Activated naive CD4-positive, alpha-beta T cell treated with anti-CD3 and anti-CD28 coated beads for 36 hours (primary cell): ENCODE measurements at regions of chr1 and their contacts with region 1.

Region 1: DNA sequence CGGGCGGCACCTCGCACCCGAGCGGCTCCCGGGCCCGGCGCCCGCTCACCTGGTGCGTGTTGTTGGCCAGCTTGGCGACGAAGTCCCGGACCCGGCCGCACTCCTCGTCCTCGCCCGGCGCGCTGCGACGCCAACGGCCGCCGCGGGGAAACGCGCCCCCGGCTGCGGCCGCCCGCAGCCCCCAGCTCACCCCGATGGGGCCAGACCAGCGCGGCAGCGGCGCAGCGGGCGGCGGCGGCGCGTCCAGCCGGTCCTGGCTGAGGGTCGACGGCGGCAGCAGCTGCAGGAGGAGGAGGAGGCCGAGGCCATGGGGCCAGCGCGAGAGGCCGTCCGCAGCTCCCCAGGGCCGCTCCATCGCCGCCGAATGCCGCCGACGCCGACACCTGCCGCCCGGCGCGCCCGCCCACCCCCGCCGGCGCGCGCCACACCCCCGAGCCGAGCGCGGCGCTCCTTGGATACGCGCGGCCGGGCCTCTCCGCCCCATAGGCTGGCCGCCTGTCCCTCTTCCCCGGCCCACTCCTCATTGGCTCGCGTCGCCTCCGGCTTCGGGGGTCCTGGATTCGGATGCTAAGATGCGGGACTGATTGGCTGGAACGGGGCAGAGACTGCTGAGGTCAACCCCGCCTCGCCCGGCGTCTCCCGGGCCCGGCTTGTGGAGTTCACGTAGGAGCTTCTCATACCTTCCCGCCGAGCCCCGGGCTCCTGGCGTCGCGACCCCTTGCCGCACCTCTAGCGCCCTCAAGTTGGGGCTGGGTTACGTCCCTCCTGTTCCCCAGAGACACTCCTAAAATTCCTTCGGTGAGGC is at the start of gene SORT1:
- DNase-seq: peak; percentile 53
- H3K4me3 Mint-ChIP-seq: peak within 1 kb of the TSS; percentile 77
- H3K27ac Mint-ChIP-seq: no peak within 1 kb of the TSS
- H3K4me1 Mint-ChIP-seq: peaks cover 8% of the 10 kb centered on the region
- H3K27me3 Mint-ChIP-seq: peaks cover 35% of the 10 kb centered on the region
- total RNA-seq, gene SORT1: 0.32 to 0.33 TPM

Region 2: DNA sequence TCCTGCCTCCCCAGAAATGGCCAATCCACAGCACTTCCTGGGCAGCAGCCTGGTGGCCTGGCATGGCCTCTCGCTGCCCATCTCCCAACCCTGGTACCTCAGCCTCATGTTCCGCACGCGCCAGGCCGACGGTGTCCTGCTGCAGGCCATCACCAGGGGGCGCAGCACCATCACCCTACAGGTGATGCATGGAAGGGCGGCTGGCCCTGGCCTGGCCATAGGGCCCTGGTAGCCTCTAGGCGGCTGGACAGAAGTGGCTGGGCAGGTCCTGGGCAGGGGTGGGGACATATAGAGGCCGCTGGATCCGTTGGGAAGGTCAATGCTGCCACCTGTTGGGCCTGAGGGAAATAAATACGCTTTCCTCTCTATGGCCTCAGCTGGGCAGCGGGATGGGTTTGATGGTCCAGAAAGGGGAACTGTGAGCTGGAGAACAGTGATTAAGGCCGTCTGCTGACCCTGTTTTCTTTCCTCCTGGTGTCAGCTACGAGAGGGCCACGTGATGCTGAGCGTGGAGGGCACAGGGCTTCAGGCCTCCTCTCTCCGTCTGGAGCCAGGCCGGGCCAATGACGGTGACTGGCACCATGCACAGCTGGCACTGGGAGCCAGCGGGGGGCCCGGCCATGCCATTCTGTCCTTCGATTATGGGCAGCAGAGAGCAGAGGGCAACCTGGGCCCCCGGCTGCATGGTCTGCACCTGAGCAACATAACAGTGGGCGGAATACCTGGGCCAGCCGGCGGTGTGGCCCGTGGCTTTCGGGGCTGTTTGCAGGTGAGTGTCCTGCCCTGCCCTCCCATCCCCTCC is 133.9 kb before region 1 on chr1:
- CTCF ChIA-PET with region 1: interaction called, 33 read pairs
- intact Hi-C with region 1: loop called (anchors 1 kb)
- DNase-seq: peak; percentile 84
- H3K4me3 Mint-ChIP-seq: no peak overlapping the region
- H3K27ac Mint-ChIP-seq: no peak overlapping the region
- H3K4me1 Mint-ChIP-seq: peaks cover 3% of the 10 kb centered on the region
- H3K27me3 Mint-ChIP-seq: peaks cover 1% of the 10 kb centered on the region

Region 3: GRCh38 chr1:109277434-109278204 is 120.1 kb before region 1 on chr1:
- CTCF ChIA-PET with region 1: interaction called, 126 read pairs
- intact Hi-C with region 1: loop called (anchors 1 kb)
- DNase-seq: peak; percentile 73
- H3K4me3 Mint-ChIP-seq: no peak overlapping the region
- H3K27ac Mint-ChIP-seq: no peak overlapping the region
- H3K4me1 Mint-ChIP-seq: peaks cover 4% of the 10 kb centered on the region
- H3K27me3 Mint-ChIP-seq: no peaks in the 10 kb centered on the region

Region 4: GRCh38 chr1:109282952-109283747 is 114.6 kb before region 1 on chr1 and contains the start of gene PSRC1:
- CTCF ChIA-PET with region 1: interaction called, 126 read pairs
- intact Hi-C with region 1: loop called (anchors 1 kb)
- DNase-seq: peak; percentile 94
- H3K4me3 Mint-ChIP-seq: peak within 1 kb of the TSS; percentile 94
- H3K27ac Mint-ChIP-seq: peak within 1 kb of the TSS; percentile 89
- H3K4me1 Mint-ChIP-seq: peaks cover 6% of the 10 kb centered on the region
- H3K27me3 Mint-ChIP-seq: no peaks in the 10 kb centered on the region
- total RNA-seq, gene PSRC1: 19.3 to 21.5 TPM

Region 5: GRCh38 chr1:109385417-109385816 is 12.3 kb before region 1 on chr1:
- CTCF ChIA-PET with region 1: interaction called, 14 read pairs
- intact Hi-C with region 1: no loop called
- DNase-seq: no peak
- H3K4me3 Mint-ChIP-seq: no peak overlapping the region
- H3K27ac Mint-ChIP-seq: no peak overlapping the region
- H3K4me1 Mint-ChIP-seq: no peaks in the 10 kb centered on the region
- H3K27me3 Mint-ChIP-seq: peaks cover 16% of the 10 kb centered on the region

Region 6: DNA sequence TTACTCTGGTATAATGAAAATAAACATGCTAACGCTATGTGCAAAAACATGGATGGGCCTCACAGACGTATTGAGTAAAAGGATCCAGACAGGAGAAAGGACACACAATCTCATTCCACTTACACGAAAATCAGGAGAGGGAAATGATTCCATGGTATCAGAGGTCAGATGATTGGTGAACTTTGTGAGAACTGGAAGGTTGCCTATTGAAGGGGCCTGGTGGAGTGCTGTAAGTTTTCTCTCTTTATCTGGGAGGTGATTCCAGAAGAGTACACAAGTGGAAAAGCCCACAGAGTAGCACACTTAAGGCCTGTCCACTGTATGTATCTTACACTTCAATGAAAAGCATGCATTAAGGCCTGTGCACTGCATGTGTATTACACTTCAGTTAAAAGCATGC is 279.7 kb after region 1 on chr1:
- CTCF ChIA-PET with region 1: no interaction called
- intact Hi-C with region 1: no loop called
- DNase-seq: no peak
- H3K4me3 Mint-ChIP-seq: no peak overlapping the region
- H3K27ac Mint-ChIP-seq: no peak overlapping the region
- H3K4me1 Mint-ChIP-seq: no peaks in the 10 kb centered on the region
- H3K27me3 Mint-ChIP-seq: no peaks in the 10 kb centered on the region